Breast epithelium (tissue), 4 donors: ENCODE measurements at regions of chr11 and their contacts with region 1.

Region 1: DNA sequence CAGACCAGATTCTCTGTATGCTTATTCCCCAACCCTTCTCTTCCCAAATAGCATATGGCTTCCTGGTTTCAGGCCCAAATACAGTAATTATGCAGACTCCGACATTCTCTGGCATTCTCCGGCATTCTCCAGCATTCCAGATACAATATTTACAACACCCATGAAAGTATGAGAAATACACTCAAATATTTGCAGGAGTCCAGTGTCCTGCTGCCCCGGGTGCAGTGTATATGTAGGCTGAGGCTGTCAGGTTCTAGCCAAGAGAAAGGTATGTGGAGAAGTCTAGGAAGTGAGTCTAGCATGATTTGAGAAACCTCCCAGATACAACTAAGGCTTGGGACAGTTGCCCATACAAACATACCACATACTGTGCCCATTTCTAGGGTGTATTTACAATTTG is 160.7 kb downstream of the SOX6 start:
- DNase-seq: no peak
- H3K4me3 ChIP-seq: no peak overlapping the region
- H3K27ac ChIP-seq: no peak overlapping the region
- H3K4me1 ChIP-seq: no peaks in the 10 kb centered on the region
- H3K27me3 ChIP-seq: no peaks in the 10 kb centered on the region
- CTCF ChIP-seq: no peak
- POLR2A ChIP-seq: no peak

Region 2: DNA sequence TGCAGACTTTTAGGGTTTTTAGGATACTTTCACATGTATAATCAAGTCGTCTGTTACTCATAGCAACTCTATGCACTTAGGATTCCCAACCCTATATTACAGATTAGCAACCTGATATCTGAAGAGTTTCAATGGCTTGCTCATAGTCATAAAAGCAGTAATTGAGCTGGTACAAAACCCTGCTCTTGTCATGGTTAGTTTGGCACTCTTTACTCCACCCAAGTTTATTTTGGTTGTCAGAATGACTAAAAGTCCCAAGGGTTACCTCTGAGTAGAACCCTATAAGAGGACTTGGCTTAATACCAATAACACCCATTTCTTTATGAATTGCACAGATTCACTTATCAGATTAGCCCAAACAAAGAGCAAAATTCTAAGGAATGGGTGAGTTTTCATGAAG is 389.9 kb before region 1 on chr11:
- intact Hi-C with region 1: loop called (anchors 5 kb)
- DNase-seq: no peak
- H3K4me3 ChIP-seq: no peak overlapping the region
- H3K27ac ChIP-seq: no peak overlapping the region
- H3K4me1 ChIP-seq: no peaks in the 10 kb centered on the region
- H3K27me3 ChIP-seq: no peaks in the 10 kb centered on the region
- CTCF ChIP-seq: no peak
- POLR2A ChIP-seq: no peak